ENCODE measurements at regions of chr7 and their contacts with region 1.

Region 1: GRCh38 chr7:15370441-15370840 is 191.4 kb downstream of the AGMO start:
- DNase-seq: no peak
- ATAC-seq: no peak
- H3K4me3 ChIP-seq: no peak overlapping the region
- H3K27ac ChIP-seq: no peak overlapping the region
- H3K4me1 ChIP-seq: no peaks in the 10 kb centered on the region
- H3K27me3 ChIP-seq: no peaks in the 10 kb centered on the region
- CTCF ChIP-seq: no peak
- EP300 ChIP-seq: no peak
- POLR2A ChIP-seq: no peak
- RAD21 ChIP-seq: no peak

Region 2: DNA sequence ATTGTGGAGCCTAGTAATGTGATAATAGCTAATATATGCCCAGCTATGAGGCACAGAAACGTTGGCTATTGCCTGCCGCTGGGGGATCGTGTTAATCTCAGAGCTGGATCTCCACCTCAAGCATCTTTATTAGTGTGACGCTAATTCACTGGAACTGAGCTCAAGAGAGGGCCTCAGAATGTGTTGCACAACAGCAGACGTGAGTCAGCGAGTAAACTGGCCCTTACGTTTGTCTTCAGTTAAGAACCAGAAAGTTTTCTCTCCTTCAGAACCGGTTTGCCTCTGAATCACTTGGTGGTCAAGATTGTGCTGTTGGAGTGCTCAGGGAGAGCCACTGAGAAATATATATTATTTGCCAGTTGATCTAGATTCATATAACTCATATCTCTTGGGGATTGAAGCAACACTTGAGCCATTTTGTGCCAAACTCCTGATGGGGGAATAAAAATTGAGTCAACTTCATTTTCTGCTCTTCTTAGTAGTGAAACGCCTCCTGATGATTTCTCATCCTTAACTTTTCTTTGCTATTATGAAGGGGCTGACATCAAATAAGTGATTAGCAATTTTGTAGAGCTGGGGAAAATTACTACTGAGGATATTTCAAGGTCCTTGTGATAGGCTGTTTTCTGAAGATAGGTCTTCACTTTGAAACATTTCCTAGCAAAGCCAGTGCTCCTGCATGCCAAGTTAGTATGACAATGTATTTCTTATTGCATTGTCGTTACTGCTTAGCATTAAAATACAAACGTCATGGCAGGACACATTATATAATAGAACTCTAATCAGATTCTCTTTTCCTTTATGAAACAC is 1297.8 kb after region 1 on chr7:
- CTCF ChIA-PET with region 1: no interaction called
- POLR2A ChIA-PET with region 1: no interaction called
- in situ Hi-C with region 1: no loop called
- intact Hi-C with region 1: loop called (anchors 10 kb)
- DNase-seq: peak; percentile 10
- ATAC-seq: no peak
- H3K4me3 ChIP-seq: no peak overlapping the region
- H3K27ac ChIP-seq: peak overlapping the region; percentile 3
- H3K4me1 ChIP-seq: peaks cover 15% of the 10 kb centered on the region
- H3K27me3 ChIP-seq: no peaks in the 10 kb centered on the region
- CTCF ChIP-seq: no peak
- EP300 ChIP-seq: no peak
- POLR2A ChIP-seq: no peak
- RAD21 ChIP-seq: no peak